A673 (cell line): ENCODE measurements at regions of chr10 and their contacts with region 1.

Region 1: DNA sequence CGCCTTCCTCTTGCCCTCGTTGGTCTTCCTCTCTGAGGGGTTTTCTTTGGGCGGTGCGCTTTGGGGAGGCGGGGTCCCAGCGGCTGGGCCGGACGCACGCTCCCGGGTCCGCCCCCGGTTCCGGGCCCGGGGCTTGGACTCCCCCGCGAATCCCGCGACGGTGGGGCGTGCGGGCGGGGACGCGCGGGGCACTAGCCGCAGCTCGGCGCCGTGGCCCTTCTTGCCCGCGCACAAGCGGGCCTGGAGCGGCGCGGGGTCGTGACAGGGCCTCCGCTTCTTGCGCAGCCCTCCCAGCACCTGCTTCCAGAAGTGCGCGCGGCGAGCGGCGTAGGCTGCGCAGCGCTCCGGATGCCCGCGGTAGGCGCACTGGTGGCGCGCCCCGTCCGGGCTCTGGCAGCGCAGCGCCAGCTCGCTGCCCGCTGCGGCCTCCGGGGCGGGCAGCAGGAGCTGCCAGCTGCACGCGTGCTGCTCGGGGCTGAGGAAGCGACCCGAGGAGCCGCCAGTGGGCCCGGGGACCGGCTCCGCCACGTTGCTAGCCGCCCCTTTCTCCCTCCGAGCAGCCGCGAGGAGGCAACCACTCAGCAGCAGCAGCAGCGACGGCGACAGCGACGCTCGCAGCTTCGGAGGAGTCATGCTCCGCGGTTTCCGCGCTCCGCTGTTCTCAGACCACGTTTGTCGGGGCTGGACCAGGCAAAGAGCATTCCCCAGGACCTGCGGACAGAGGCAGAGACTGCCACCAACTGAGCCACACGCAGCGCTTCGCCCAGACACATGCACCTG is 759 bp downstream of the FGFBP3 start:
- DNase-seq: peak; percentile 91
- H3K4me3 ChIP-seq: peak overlapping the region; percentile 82
- H3K27ac ChIP-seq: peak overlapping the region; percentile 66
- H3K4me1 ChIP-seq: peaks cover 15% of the 10 kb centered on the region
- H3K27me3 ChIP-seq: no peaks in the 10 kb centered on the region
- CTCF ChIP-seq: peak; percentile 75

Region 2: GRCh38 chr10:90912174-90912573 is 996.4 kb before region 1 on chr10:
- CTCF ChIA-PET with region 1: interaction called, 3 read pairs
- POLR2A ChIA-PET with region 1: no interaction called
- intact Hi-C with region 1: loop called (anchors 10 kb)
- DNase-seq: no peak
- H3K4me3 ChIP-seq: no peak overlapping the region
- H3K27ac ChIP-seq: no peak overlapping the region
- H3K4me1 ChIP-seq: no peaks in the 10 kb centered on the region
- H3K27me3 ChIP-seq: no peaks in the 10 kb centered on the region
- CTCF ChIP-seq: no peak

Region 3: GRCh38 chr10:91389636-91390512 is 518.7 kb before region 1 on chr10:
- CTCF ChIA-PET with region 1: no interaction called
- POLR2A ChIA-PET with region 1: no interaction called
- intact Hi-C with region 1: loop called (anchors 10 kb)
- DNase-seq: peak; percentile 78
- H3K4me3 ChIP-seq: peak overlapping the region; percentile 24
- H3K27ac ChIP-seq: no peak overlapping the region
- H3K4me1 ChIP-seq: peaks cover 3% of the 10 kb centered on the region
- H3K27me3 ChIP-seq: no peaks in the 10 kb centered on the region
- CTCF ChIP-seq: peak; percentile 67

Region 4: DNA sequence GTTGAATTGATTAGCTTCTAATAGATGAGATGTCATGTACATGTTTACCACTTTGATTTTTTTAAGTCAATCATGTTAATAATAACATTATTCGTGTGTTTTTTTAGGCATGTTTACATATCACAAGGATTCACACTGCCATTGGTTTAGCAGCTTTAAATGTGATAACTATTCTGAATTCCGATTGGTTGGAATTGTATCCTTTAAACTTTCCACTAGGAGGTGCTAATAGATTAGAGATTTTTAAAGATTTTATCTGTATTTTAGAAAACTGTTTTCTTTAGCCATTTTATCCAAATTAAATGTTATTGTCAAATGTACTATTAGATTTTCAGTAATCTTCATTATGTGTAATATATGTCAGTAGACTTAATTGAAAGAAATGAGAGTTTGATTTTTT is 415.2 kb before region 1 on chr10:
- CTCF ChIA-PET with region 1: no interaction called
- POLR2A ChIA-PET with region 1: no interaction called
- intact Hi-C with region 1: loop called (anchors 5 kb)
- DNase-seq: peak; percentile 62
- H3K4me3 ChIP-seq: no peak overlapping the region
- H3K27ac ChIP-seq: no peak overlapping the region
- H3K4me1 ChIP-seq: peaks cover 8% of the 10 kb centered on the region
- H3K27me3 ChIP-seq: no peaks in the 10 kb centered on the region
- CTCF ChIP-seq: peak; percentile 61

Region 5: DNA sequence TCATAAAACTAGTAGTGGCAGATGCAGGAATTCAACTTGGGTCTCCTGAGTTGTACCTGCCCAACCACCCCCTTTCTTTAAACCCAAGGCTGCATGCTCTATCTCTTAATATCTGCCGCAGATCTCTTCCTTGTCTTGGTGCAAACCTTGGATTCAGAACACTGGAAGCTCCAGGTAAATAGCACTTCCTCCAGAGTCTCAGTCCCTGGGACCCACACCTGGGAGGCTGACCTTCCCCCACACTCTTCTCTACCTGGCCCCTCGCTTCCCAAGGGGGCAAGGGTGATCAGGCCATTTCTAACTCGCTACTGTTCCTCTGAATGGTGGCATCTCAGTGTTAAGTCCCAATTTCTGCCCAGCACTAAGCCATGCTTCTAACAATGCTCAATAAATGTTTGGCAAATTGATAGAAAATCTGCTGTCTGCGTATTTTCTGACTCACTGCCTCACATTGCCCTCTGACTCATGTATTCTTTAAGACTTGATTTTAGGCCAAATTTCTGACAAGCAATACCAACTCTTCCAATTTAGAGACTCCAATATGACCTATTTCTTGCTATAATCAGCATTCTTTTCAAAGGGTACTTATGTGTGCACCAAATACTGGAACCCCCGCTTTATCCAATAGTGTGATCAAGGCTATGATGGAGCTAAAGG is 207.6 kb before region 1 on chr10:
- CTCF ChIA-PET with region 1: no interaction called
- POLR2A ChIA-PET with region 1: no interaction called
- intact Hi-C with region 1: no loop called
- DNase-seq: peak; percentile 11
- H3K4me3 ChIP-seq: no peak overlapping the region
- H3K27ac ChIP-seq: no peak overlapping the region
- H3K4me1 ChIP-seq: no peaks in the 10 kb centered on the region
- H3K27me3 ChIP-seq: no peaks in the 10 kb centered on the region
- CTCF ChIP-seq: no peak

Region 6: DNA sequence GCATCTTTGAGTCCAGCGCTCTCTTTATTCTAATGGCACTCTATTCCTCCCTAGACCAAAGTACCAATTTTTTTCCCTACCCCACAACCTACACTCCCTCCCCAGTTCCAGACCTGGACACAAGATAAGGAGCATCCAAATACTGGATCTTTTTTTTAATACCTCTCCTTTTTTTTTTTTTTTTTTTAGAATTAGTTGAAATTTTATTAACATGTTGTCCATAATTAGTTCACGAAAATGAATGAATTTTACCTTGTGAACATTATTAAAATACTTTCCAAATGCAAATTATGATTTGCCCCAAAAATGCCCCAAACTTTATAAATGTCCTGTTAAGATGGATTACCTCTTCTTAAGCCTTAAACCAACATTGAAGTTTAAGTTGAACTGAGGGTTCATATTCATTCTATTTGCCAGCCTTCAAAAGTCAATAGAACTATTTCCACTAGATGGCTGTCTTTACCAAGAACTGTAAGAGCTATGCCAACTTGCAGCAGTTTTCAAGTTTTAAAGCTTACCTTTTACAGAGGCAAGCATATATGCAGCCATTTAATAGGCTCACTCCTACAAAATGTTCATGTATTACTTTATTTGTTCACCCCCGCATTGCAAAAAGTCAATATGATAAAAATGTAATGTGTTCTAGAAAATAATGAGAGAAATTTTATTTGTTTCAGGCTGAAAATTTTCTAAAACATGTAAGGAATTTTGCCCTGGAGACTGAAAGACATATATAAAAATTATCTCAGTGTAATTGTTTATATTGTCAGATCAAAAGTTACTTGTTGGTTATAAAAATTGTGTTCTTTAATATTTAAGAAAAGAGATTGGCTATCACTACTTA is 150.0 kb before region 1 on chr10:
- CTCF ChIA-PET with region 1: interaction called, 5 read pairs
- POLR2A ChIA-PET with region 1: no interaction called
- intact Hi-C with region 1: loop called (anchors 2 kb)
- DNase-seq: peak; percentile 71
- H3K4me3 ChIP-seq: no peak overlapping the region
- H3K27ac ChIP-seq: no peak overlapping the region
- H3K4me1 ChIP-seq: no peaks in the 10 kb centered on the region
- H3K27me3 ChIP-seq: no peaks in the 10 kb centered on the region
- CTCF ChIP-seq: peak; percentile 64